Activated T-helper 1 cell treated with anti-CD3 and anti-CD28 coated beads, Interleukin-12 subunit alpha, Interleukin-12 subunit beta, Interleukin-2, Interleukin-4 antibody, amounts not matched to agents 30 ng/mL and 10 ng/mL and 1 ng/mL, durations not matched to agents 14 hours and 24 hours and 36 hours (primary cell): ENCODE measurements at regions of chr1 and their contacts with region 1.

Region 1: DNA sequence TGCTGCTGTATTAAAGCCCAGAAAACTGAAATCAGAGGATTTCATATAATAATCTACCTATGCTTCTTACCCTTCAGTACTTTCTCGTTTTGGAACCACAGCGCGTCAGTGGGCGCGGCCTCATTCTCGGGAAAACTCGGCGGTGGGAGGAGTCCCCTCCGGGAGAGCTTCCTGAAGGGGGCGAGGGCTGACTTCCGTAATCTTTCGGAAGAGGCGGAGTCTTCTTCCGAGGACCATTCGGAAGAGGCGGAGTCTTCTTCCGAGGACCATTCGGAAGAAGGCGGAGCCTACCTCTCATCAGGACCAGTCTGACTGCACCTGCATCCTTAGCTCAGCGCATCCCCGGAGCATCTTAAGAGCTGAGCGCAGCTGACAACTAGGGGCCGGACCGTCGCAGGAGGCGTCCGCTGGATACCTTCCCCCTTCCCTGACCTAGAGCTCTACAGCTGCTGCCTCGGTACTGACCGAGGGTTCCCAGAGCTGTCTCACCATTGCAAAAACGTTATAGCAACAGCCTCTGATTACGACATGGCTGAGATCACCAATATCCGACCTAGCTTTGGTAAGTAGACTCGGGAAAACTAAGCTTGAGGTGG is at the start of gene SYT11:
- DNase-seq: peak; percentile 90
- H3K4me3 Mint-ChIP-seq: peak within 1 kb of the TSS; percentile 89
- H3K27ac Mint-ChIP-seq: peak within 1 kb of the TSS; percentile 98
- H3K4me1 Mint-ChIP-seq: peaks cover 47% of the 10 kb centered on the region
- H3K27me3 Mint-ChIP-seq: no peaks in the 10 kb centered on the region
- total RNA-seq, gene SYT11: 25.7 and 26.8 TPM in 2 replicates

Region 2: DNA sequence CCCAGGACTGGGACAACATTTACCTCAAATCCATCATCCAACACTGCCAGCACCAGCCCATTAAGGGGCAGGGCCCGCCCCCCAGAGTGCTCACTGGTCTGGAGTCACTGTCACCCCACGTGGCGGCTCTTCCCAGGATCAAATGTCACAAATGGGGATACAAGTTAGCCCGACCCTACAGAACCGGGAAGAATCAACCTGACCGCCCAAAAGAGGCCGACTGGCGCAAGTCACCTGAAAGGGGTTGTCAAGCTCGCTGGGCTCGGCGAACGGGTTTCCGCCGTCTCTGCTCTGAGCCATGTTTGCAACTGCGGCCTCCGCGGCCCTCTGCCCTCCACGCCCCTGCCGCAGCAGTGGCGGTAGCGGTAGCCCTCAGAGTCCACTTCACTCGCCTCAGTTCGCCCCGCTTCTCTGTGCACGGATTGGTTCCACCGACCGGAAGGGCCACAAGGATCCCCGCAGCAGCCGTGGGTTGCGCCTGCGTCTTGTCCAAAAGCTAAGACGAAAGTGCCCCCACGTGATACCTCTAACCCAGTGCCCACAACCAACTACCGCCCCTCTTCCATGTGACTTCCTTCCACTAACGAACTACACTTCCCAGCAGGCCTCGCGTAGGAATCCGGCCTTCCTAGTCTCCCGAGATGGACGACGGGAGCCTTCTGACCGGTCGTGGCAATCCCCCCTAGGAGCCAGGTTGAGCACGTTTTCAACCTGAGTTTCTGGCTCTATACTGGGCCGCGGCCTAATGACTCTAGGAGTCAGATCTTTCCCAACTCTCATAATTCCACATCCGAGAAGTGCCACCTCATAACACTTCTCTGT is 597.3 kb before region 1 on chr1 and contains the start of gene SCAMP3:
- intact Hi-C with region 1: loop called (anchors 1 kb)
- DNase-seq: peak; percentile 88
- H3K4me3 Mint-ChIP-seq: peak within 1 kb of the TSS; percentile 90
- H3K27ac Mint-ChIP-seq: peak within 1 kb of the TSS; percentile 88
- H3K4me1 Mint-ChIP-seq: peaks cover 38% of the 10 kb centered on the region
- H3K27me3 Mint-ChIP-seq: no peaks in the 10 kb centered on the region
- total RNA-seq, gene SCAMP3: 147 and 168 TPM in 2 replicates

Region 3: GRCh38 chr1:155323798-155324610 is 535.3 kb before region 1 on chr1:
- intact Hi-C with region 1: loop called (anchors 1 kb)
- DNase-seq: peak; percentile 90
- H3K4me3 Mint-ChIP-seq: peak overlapping the region; percentile 86
- H3K27ac Mint-ChIP-seq: peak overlapping the region; percentile 75
- H3K4me1 Mint-ChIP-seq: peaks cover 40% of the 10 kb centered on the region
- H3K27me3 Mint-ChIP-seq: no peaks in the 10 kb centered on the region

Region 4: DNA sequence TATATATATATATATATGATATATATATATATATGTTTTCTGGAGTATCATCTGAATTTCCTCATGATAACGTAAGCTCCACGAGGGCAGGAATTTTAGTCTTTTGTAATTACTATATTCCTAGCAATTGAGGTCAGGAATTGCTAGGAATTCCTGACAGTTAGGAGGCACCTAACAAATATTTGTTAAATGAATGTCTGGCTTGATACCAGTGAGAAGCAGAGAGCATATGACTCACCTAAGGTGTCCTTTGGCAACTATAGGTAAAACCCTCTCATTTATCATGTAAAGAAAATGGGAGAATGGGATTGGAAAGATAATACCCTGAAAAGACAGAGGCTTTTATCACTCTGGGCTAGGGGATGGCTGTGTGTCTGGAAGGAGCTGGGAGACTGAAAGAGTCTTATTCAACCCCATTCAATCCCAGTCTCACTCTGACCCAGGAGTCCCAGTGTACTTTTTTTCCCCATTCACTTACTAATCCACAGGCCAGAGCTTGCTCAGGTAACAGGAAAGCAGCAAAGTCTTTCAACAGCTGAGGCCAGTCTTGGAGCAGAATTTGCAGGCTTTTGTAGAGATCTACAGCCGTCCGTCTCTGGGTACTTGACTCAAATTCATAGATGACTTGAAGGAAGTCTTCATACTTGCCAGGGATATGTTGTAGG is 99.2 kb before region 1 on chr1:
- intact Hi-C with region 1: no loop called
- DNase-seq: no peak
- H3K4me3 Mint-ChIP-seq: no peak overlapping the region
- H3K27ac Mint-ChIP-seq: no peak overlapping the region
- H3K4me1 Mint-ChIP-seq: no peaks in the 10 kb centered on the region
- H3K27me3 Mint-ChIP-seq: no peaks in the 10 kb centered on the region

Region 5: DNA sequence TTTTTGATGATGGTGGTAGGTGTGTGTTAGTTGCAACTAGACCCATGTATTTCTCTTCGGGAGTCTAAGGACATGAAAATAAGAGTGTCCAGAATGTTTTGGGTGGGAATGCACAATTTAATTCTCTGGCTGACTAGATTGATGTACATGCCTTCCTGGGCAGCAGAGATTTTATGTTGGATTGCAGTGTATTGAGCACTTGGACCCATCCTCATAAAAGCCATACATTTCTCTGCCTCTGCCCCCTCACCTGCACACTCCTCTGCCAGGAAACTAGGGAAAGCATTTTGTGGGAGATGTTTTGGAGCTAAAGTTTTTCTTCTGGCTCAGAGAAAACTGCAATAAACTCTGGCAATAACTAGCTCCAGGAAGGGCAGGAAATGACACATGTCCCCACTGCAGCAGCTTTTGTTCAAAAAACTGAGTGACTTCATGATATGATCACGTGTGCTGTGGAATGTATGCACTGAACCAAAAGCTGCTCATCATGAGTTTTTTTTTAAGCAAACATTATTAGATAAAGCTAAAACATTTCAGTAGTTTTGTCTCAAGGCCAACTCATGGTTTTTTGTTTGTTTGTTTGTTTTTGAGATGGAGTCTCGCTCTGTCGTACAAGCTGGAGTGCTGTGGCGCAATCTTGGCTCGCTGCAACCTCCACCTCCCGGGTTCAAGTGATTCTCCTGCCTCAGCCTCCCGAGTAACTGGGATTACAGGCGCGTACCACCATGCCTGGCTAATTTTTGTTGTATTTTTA is 34.2 kb after region 1 on chr1:
- intact Hi-C with region 1: loop called (anchors 1 kb)
- DNase-seq: peak; percentile 17
- H3K4me3 Mint-ChIP-seq: no peak overlapping the region
- H3K27ac Mint-ChIP-seq: peak overlapping the region; percentile 50
- H3K4me1 Mint-ChIP-seq: peaks cover 19% of the 10 kb centered on the region
- H3K27me3 Mint-ChIP-seq: no peaks in the 10 kb centered on the region

Region 6: DNA sequence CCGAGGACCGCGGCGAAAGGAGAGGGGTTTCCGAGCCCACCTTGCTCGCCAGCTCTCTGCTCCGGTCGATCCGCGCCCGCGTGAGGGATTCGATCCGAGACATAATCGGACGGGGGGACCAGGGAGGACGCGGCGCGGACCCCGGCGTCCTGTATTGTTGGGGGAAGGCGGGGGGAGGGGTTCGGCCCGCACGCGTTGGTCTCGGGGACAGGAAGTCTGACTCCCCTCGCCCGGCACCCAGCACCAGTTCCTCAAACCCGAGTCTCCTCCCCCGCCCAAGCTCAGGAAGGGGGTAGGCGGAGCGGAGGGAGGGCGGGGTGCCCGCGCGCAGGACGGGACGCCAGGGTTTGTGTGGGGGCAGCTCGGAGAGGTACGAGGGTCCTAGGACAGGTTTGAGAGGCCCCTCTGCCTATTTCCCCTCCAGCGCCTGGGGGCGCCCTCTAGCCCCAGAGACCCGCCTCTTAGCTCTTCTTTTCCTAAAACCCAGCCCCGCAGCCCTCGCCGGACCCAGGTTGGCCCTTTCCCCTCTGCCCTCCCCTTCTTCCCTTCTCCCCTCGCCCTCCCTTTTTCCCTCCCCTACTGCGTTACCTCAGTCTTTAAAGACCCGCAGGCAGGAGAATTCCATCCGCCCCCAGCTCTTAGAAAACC is 119.1 kb after region 1 on chr1 and contains the start of gene ARHGEF2:
- intact Hi-C with region 1: loop called (anchors 1 kb)
- DNase-seq: peak; percentile 71
- H3K4me3 Mint-ChIP-seq: peak within 1 kb of the TSS; percentile 92
- H3K27ac Mint-ChIP-seq: peak within 1 kb of the TSS; percentile 95
- H3K4me1 Mint-ChIP-seq: peaks cover 78% of the 10 kb centered on the region
- H3K27me3 Mint-ChIP-seq: no peaks in the 10 kb centered on the region
- total RNA-seq, gene ARHGEF2: 221 and 222 TPM in 2 replicates

Region 7: GRCh38 chr1:156045076-156045475 is 185.7 kb after region 1 on chr1:
- intact Hi-C with region 1: no loop called
- DNase-seq: peak; percentile 21
- H3K4me3 Mint-ChIP-seq: no peak overlapping the region
- H3K27ac Mint-ChIP-seq: peak overlapping the region; percentile 2
- H3K4me1 Mint-ChIP-seq: peaks cover 24% of the 10 kb centered on the region
- H3K27me3 Mint-ChIP-seq: no peaks in the 10 kb centered on the region

Region 8: DNA sequence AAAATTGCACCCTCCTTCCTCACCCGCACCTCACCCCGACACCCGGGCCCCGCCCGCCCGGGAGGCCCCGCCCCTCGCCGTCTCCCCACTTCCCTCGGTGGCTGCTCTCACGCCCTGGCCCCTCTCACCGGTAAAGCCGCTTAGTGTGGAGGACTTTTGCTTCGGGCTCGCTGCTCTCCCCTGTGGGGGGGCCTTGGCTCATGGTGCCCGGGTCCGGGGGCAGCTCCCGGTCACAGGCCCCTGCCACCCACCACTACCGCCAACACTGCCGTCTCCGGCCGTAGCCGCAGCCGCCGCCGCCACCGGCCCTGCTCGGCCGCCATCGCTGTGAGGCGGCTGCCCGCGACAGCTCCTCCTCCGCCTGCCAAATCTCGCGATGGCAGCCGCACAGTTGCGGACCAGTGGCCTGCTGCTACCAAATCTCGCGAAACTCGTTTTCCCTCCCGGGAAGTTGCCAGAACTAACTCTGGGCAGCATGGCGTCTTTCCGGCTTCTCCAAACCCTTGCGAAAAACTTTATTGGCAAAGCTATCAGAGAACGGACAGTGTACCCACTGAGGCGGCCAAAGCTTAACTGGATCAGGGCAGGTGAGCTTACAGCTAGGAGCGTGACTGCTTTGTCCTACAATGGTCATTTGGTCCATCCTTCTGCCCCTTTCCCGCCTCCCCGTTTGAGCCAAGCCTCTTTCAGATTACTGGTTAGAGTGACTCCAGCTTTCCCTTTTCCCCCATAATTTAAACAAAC is 423.3 kb after region 1 on chr1 and contains the start of gene SMG5:
- intact Hi-C with region 1: loop called (anchors 1 kb)
- DNase-seq: peak; percentile 94
- H3K4me3 Mint-ChIP-seq: peak within 1 kb of the TSS; percentile 91
- H3K27ac Mint-ChIP-seq: peak within 1 kb of the TSS; percentile 93
- H3K4me1 Mint-ChIP-seq: peaks cover 44% of the 10 kb centered on the region
- H3K27me3 Mint-ChIP-seq: peaks cover 1% of the 10 kb centered on the region
- total RNA-seq, gene SMG5: 95.6 TPM in 2 replicates